Endothelial cell of umbilical vein (primary cell): ENCODE measurements at regions of chr11 and their contacts with region 1.

Region 1: GRCh38 chr11:69918938-69919650 is 99.9 kb upstream of the FGF3 start:
- DNase-seq: peak; percentile 41
- H3K4me3 ChIP-seq: no peak overlapping the region
- H3K27ac ChIP-seq: no peak overlapping the region
- H3K4me1 ChIP-seq: peaks cover 11% of the 10 kb centered on the region
- H3K27me3 ChIP-seq: peaks cover 1 to 10% of the 10 kb centered on the region in 2 experiments
- CTCF ChIP-seq: peak; percentile 91 to 97
- POLR2A ChIP-seq: no peak

Region 2: DNA sequence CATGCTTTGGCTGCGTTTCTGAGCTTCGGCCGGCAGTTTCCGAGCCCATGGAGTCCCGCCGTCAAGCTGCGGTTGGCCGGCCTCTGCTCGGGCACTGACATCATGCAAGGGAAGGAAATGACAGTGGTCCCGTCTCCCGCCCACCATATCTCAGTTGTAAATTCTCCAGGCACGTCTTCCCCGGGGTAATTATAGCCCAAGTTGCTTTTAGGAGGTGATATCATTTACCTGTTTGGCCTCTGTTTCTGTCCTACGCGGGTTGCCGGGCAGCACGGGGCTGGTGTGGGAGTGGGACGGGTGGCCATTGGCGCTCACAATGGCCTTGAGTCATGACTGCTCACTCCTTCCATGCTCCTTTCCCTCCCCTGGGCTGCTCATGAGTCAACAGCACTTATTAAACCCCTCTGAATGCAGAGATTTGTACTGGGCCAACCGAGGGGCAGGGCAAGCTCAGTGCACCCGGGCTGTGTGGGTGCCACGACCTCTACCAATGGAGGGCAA is 154.8 kb after region 1 on chr11:
- CTCF ChIA-PET with region 1: interaction called, 14 read pairs
- POLR2A ChIA-PET with region 1: no interaction called
- dilution Hi-C with region 1: no loop called
- intact Hi-C with region 1: no loop called
- DNase-seq: peak; percentile 81
- H3K4me3 ChIP-seq: no peak overlapping the region
- H3K27ac ChIP-seq: peak overlapping the region; percentile 45
- H3K4me1 ChIP-seq: peaks cover 17% of the 10 kb centered on the region
- H3K27me3 ChIP-seq: peaks cover 15 to 23% of the 10 kb centered on the region in 2 experiments
- CTCF ChIP-seq: no peak
- POLR2A ChIP-seq: no peak

Region 3: DNA sequence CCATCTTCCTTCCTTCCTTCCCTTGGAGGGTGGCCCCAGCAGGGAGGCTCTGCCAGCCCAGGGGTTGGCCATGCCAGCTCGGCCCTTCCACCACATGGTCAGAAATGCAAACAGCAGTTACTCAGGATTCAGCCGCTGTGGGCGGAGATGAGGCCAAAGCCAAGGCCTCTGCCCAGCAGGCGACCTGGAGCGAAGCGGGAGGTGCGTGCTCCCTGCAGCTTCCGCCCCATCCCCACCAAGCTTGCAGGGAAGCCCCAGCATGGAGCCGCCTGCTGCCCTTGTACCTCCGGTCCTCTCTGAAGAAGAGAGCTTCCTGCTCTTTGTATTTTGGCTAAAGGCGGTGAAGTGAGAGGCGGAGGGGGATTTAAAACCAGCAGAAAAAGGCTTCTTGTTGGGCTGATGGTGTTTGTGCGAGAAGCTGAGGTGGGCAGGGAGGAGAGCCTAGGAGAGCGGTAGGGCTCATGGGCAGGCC is 209.4 kb after region 1 on chr11:
- CTCF ChIA-PET with region 1: interaction called, 7 read pairs
- POLR2A ChIA-PET with region 1: no interaction called
- dilution Hi-C with region 1: no loop called
- intact Hi-C with region 1: loop called (anchors 1 kb)
- DNase-seq: peak; percentile 52
- H3K4me3 ChIP-seq: no peak overlapping the region
- H3K27ac ChIP-seq: no peak overlapping the region
- H3K4me1 ChIP-seq: peaks cover 12% of the 10 kb centered on the region
- H3K27me3 ChIP-seq: no peaks in the 10 kb centered on the region
- CTCF ChIP-seq: peak in 1 of 2 donors; percentile 24
- POLR2A ChIP-seq: no peak

Region 4: DNA sequence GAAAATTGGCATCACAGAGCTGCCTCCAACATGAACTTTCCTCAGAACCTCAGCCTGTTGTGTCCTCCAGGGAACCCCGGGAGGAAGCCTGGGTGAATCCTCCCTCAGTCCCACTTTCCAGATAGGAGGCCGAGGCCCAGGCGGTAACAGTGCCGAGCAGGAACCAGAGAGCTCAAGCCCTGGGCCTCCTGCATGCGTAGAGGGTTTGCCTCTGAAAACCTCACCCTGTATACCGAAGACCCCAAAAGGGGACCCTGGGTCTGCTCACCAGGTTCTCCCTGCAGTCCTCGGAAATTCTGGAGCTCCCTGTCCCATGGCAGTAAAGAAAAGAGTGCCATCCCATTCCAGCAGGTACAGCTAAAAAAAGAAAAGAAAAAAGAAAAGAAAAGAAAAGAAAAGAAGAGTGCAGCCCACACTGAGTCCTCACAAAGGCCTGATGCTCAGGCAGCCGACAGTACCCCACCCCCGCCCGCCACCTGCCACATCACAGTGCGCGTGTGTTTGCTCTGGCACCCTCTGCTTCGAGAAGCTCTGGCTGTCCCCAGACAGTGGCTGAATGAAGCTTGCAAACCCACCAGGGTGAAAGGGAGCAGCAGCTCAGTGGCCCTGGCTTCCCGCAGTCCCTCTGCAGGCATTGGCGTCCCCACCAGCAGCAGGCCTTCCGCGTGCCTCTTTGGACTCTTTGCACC is 255.6 kb after region 1 on chr11:
- CTCF ChIA-PET with region 1: interaction called, 10 read pairs
- POLR2A ChIA-PET with region 1: no interaction called
- dilution Hi-C with region 1: loop called (anchors 25 kb)
- intact Hi-C with region 1: no loop called
- DNase-seq: no peak
- H3K4me3 ChIP-seq: no peak overlapping the region
- H3K27ac ChIP-seq: no peak overlapping the region
- H3K4me1 ChIP-seq: no peaks in the 10 kb centered on the region
- H3K27me3 ChIP-seq: no peaks in the 10 kb centered on the region
- CTCF ChIP-seq: no peak
- POLR2A ChIP-seq: no peak

Region 5: GRCh38 chr11:70191495-70192140 is 272.5 kb after region 1 on chr11:
- CTCF ChIA-PET with region 1: interaction called, 70 read pairs
- POLR2A ChIA-PET with region 1: no interaction called
- dilution Hi-C with region 1: loop called (anchors 25 kb)
- intact Hi-C with region 1: loop called (anchors 1 kb)
- DNase-seq: peak; percentile 54
- H3K4me3 ChIP-seq: no peak overlapping the region
- H3K27ac ChIP-seq: no peak overlapping the region
- H3K4me1 ChIP-seq: no peaks in the 10 kb centered on the region
- H3K27me3 ChIP-seq: no peaks in the 10 kb centered on the region
- CTCF ChIP-seq: peak; percentile 84 to 98
- POLR2A ChIP-seq: no peak

Region 6: DNA sequence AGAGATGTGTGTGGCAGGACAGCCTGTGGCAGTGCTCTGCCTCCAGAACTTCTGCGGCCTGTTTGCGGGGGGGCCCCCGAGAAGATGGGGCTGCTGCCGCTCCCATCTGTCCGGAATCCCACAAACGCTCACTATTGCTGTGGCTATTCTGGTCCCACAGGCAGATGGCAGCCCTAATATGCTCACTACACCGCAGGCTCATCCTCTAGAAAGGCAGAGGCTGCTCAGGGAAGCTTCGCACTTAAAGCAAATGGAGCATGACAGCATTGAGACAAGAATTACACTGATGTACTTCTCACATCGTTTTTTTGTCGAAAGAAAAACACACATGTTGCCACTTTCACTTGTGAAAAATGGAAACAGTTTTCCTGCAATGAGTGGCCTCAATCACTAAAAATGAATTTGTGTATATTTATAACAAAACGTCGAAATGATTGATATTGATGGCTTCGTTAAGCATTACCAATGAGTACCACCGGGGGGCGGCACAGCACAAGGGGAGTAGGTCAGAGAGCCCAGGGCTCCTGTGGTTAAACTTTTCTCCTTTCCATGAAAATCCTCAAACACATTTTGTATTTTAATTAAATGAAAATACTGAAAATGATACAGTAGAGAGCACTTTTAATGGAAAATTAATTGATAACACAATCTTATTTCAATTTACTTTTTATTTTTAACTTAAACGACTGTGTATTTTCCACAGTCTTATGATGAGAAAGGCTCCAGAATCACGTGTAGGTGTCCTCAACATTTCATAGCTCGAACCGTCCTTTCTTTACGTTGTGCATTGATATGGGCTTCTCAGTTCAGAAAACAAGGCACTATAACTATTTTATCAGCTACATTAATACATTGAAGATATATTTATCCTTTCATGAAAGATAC is 548.3 kb after region 1 on chr11:
- CTCF ChIA-PET with region 1: no interaction called
- POLR2A ChIA-PET with region 1: no interaction called
- dilution Hi-C with region 1: no loop called
- intact Hi-C with region 1: loop called (anchors 10 kb)
- DNase-seq: peak; percentile 51
- H3K4me3 ChIP-seq: no peak overlapping the region
- H3K27ac ChIP-seq: no peak overlapping the region
- H3K4me1 ChIP-seq: no peaks in the 10 kb centered on the region
- H3K27me3 ChIP-seq: no peaks in the 10 kb centered on the region
- CTCF ChIP-seq: peak; percentile 70 to 87
- POLR2A ChIP-seq: no peak